ENCODE measurements at regions of chr18 and their contacts with region 1.

Region 1: DNA sequence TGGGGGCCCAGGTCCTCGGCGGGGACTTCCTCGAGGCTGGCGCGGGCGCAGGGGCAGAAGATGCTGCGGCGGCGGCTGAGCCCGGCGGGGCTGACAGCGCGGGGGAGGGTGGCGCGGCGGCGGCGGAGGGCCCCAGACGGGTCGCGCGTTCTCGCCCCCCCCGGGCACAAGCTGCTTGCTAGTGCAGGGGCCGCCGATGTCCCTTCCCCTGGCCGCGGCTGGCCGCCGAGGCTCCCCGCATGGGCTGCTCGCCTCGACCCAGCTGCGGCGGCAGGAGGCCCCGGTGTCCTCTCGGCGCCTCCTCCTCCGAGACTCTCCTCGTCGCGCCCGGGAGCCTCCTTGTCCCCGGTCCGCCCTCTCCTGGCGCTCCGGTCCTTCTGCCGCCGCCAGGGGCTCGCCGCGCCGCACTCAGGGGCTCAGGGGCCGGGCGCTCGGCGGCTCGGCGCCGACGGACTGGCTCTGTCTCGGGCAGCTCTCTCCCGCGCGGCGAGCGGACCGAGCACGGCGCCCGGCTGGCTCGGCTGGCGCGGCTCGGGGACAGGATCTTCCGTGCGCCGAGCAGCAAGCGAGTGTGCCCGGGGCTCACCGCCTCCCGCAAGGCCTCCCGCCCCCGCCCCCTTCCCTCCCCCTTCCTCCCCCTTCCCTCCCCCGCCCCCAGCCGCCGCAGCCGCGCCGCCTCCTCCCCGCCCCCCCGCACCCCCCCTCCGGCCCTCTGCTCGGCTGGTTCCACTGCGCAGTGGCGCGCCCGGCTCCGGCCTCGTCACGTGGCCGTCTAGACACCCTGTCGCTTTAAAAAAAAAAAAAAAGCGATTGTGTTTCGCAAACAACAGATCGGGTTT is 902 bp upstream of the SMAD7 start:
- DNase-seq: peak; percentile 90
- H3K4me3 Mint-ChIP-seq: peak overlapping the region; percentile 91
- H3K27ac Mint-ChIP-seq: peak overlapping the region; percentile 95
- H3K4me1 Mint-ChIP-seq: peaks cover 42% of the 10 kb centered on the region
- H3K27me3 Mint-ChIP-seq: no peaks in the 10 kb centered on the region
- CTCF ChIP-seq: peak; percentile 9

Region 2: DNA sequence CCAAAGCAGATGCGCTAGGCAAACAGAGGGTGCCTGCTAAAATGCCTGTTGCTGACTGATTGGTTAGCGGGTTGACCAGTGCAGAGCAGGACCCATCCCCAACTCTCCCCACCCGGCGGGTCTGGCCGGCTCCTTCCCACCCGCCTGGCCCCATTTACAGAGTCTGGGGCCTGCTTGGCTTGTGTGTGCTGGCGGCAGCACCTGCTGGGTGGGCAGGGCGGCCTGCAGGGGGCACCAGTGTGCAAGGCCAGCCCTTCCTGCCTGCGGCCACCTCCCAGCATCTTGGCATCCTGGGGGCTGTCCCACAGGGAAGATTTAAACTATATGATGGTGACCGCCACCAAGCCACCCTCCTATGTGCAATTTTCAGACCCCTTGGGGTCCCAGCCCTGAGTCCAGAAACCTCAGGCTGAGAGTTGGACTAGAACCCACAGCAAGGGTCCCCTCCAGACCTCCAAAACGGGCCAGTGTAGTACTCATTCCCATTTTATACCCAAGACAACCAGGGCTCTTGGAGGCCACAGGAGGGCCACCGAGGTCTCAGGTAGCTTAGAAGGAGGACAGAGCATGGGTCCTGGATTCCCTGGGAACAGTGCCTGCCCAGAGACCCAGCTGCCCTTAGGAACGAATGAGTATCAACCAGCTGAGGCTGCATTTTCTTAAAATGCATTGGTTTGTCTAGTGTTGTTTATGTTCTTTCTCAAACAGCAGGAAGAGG is 174.5 kb before region 1 on chr18:
- CTCF ChIA-PET with region 1: no interaction called
- POLR2A ChIA-PET with region 1: no interaction called
- intact Hi-C with region 1: loop called (anchors 2 kb)
- DNase-seq: peak; percentile 59
- H3K4me3 Mint-ChIP-seq: no peak overlapping the region
- H3K27ac Mint-ChIP-seq: no peak overlapping the region
- H3K4me1 Mint-ChIP-seq: peaks cover 4% of the 10 kb centered on the region
- H3K27me3 Mint-ChIP-seq: no peaks in the 10 kb centered on the region
- CTCF ChIP-seq: peak; percentile 84

Region 3: GRCh38 chr18:48872234-48873145 is 79.2 kb before region 1 on chr18:
- CTCF ChIA-PET with region 1: no interaction called
- POLR2A ChIA-PET with region 1: interaction called, 4 read pairs
- intact Hi-C with region 1: loop called (anchors 2 kb)
- DNase-seq: peak; percentile 62
- H3K4me3 Mint-ChIP-seq: no peak overlapping the region
- H3K27ac Mint-ChIP-seq: peak overlapping the region; percentile 80
- H3K4me1 Mint-ChIP-seq: peaks cover 16% of the 10 kb centered on the region
- H3K27me3 Mint-ChIP-seq: no peaks in the 10 kb centered on the region
- CTCF ChIP-seq: no peak

Region 4: GRCh38 chr18:48915581-48916492 is 35.8 kb before region 1 on chr18:
- CTCF ChIA-PET with region 1: no interaction called
- POLR2A ChIA-PET with region 1: no interaction called
- intact Hi-C with region 1: no loop called
- DNase-seq: no peak
- H3K4me3 Mint-ChIP-seq: no peak overlapping the region
- H3K27ac Mint-ChIP-seq: no peak overlapping the region
- H3K4me1 Mint-ChIP-seq: no peaks in the 10 kb centered on the region
- H3K27me3 Mint-ChIP-seq: no peaks in the 10 kb centered on the region
- CTCF ChIP-seq: no peak

Region 5: GRCh38 chr18:48975649-48976204 is 24.1 kb after region 1 on chr18:
- CTCF ChIA-PET with region 1: interaction called, 5 read pairs
- POLR2A ChIA-PET with region 1: interaction called, 51 read pairs
- intact Hi-C with region 1: no loop called
- DNase-seq: peak; percentile 57
- H3K4me3 Mint-ChIP-seq: peak overlapping the region; percentile 30
- H3K27ac Mint-ChIP-seq: no peak overlapping the region
- H3K4me1 Mint-ChIP-seq: peaks cover 5% of the 10 kb centered on the region
- H3K27me3 Mint-ChIP-seq: no peaks in the 10 kb centered on the region
- CTCF ChIP-seq: no peak

Region 6: GRCh38 chr18:48997985-48998831 is 46.5 kb after region 1 on chr18:
- CTCF ChIA-PET with region 1: no interaction called
- POLR2A ChIA-PET with region 1: interaction called, 29 read pairs
- intact Hi-C with region 1: loop called (anchors 1 kb)
- DNase-seq: peak; percentile 97
- H3K4me3 Mint-ChIP-seq: peak overlapping the region; percentile 13
- H3K27ac Mint-ChIP-seq: peak overlapping the region; percentile 83
- H3K4me1 Mint-ChIP-seq: peaks cover 31% of the 10 kb centered on the region
- H3K27me3 Mint-ChIP-seq: no peaks in the 10 kb centered on the region
- CTCF ChIP-seq: no peak

Region 7: DNA sequence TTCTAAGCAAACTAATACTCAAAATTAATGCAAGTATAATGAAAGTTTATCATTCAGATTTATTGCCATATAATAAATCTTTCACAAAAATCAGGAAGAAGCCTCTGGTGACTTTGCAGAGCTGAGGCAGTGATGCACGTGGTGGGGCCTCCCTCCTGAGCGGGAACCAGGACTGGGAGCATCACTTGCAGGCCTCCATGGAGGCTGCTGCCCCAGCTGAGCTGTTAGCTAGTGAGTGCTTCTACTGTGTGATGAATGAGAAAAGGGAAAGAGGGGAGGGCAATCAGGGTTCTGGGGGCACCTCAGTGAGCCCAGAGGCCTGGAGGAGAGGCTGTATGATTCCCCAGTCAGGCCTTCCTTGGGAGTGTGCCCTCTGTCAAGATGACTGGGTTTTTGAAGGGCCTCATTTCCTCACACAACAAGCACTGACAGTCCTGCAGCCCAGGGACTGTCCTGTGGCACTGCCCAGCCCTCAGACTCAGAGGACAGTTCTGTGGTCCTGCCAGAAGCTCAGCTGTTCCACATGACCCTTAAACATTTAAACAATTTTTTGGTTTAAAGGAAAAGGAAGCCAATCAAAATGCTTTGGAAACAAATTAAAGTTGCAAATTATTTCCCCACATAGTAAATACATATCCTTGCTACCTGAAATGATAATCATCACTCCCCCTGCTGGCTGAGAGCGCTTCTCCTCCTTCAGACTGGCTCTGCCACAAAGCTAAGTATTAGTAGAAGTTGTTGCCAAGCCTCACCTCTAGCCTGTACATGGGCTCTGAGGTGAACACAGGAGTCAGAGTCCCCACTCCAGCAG is 90.0 kb after region 1 on chr18:
- CTCF ChIA-PET with region 1: interaction called, 4 read pairs
- POLR2A ChIA-PET with region 1: interaction called, 4 read pairs
- intact Hi-C with region 1: loop called (anchors 1 kb)
- DNase-seq: peak; percentile 54
- H3K4me3 Mint-ChIP-seq: no peak overlapping the region
- H3K27ac Mint-ChIP-seq: no peak overlapping the region
- H3K4me1 Mint-ChIP-seq: no peaks in the 10 kb centered on the region
- H3K27me3 Mint-ChIP-seq: no peaks in the 10 kb centered on the region
- CTCF ChIP-seq: peak; percentile 52

Region 8: DNA sequence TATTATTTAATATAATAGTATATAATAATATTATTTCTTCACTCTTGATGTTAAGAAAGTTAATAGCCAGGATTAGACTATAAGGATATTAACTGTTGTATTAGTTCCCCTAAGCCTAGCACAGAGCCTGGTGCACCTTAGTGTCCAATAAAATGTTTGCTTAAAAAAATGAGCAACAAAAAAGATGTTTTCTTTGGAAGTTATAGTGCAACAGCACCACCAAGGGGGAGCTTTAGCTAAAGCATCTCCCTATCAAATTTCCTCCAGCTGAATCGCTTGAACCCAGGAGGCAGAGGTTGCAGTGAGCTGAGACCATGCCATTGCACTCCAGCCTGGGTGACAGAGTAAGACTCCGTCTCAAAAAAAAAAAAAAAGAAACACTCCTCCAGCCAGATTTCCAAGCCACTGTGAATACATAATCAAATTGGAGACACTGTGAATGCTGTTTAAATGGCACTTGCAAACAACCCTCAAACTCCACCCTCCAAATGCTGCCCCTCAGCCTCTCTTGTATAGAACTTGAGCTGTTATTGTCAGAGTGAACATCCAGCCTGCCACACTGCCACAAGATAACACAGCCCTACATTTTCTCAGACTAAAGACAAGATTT is 286.9 kb after region 1 on chr18:
- CTCF ChIA-PET with region 1: interaction called, 3 read pairs
- POLR2A ChIA-PET with region 1: interaction called, 4 read pairs
- intact Hi-C with region 1: loop called (anchors 5 kb)
- DNase-seq: peak; percentile 48
- H3K4me3 Mint-ChIP-seq: no peak overlapping the region
- H3K27ac Mint-ChIP-seq: no peak overlapping the region
- H3K4me1 Mint-ChIP-seq: no peaks in the 10 kb centered on the region
- H3K27me3 Mint-ChIP-seq: no peaks in the 10 kb centered on the region
- CTCF ChIP-seq: peak; percentile 51

Measured in MCF 10A (cell line).